Activated CD8-positive, alpha-beta T cell treated with anti-CD3 and anti-CD28 coated beads, Interleukin-2, amount 10 ng/mL, durations not matched to agents 7 days and 5 days (primary cell): ENCODE measurements at regions of chr19 and their contacts with region 1.

Region 1: DNA sequence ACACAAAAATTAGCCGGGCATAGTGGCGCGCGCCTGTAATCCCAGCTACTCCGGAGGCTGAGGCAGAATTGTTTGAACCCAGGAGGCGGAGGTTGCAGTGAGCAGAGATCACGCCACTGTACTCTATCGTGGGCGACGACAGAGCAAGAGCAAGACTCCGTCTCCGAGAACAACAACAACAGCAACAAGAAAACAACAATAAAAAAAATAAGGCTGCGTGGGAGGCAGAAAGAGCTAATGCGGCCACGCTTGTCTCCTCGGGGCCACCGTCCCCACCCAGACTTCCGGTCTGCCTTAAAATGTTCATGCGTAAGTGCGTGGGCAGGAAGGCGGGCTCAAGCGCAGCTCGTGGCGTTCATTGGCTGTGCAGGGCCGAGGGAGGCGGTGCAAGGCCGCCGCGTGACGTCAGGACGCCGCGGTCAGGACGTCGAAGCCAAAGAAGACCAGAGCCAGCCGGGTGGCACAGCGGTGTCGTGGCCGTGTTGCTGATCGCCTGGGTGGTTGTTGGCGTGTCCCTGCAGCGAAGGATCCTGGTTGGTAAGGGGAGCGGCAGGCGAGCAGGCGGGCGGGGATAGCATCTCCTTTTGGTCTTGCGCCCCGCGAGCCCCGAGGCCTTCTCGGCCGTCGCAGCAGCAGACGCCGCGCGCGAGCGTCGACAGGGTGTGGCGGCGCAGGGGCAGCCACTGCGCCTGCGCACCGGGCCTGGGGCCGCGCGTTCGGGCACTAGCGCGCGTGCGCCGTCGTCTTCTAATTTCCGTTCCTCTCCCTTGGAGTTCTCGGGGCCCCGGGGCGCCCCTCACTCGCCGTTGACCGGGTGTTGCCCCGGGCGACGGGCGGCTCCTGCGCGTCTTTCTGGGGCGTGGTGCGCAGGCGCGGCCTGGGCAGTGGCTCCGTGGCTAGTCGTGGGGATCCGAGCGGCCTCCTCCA is at the start of gene LENG8:
- DNase-seq: peak; percentile 98
- ATAC-seq: peak; percentile 92
- H3K4me3 Mint-ChIP-seq: peak within 1 kb of the TSS; percentile 97
- H3K27ac Mint-ChIP-seq: peak within 1 kb of the TSS; percentile 100
- H3K4me1 Mint-ChIP-seq: peaks cover 36% of the 10 kb centered on the region
- H3K27me3 Mint-ChIP-seq: no peaks in the 10 kb centered on the region
- total RNA-seq, gene LENG8: 171 to 181 TPM

Region 2: GRCh38 chr19:54463531-54464043 is 14.6 kb after region 1 on chr19 and contains the start of gene LENG9:
- CTCF ChIA-PET with region 1: interaction called, 6 read pairs
- POLR2A ChIA-PET with region 1: interaction called, 22 read pairs
- DNase-seq: peak; percentile 99
- ATAC-seq: peak; percentile 71
- H3K4me3 Mint-ChIP-seq: peak within 1 kb of the TSS; percentile 85
- H3K27ac Mint-ChIP-seq: peak within 1 kb of the TSS; percentile 91
- H3K4me1 Mint-ChIP-seq: peaks cover 38% of the 10 kb centered on the region
- H3K27me3 Mint-ChIP-seq: peaks cover 16% of the 10 kb centered on the region
- total RNA-seq, gene LENG9: 5.3 to 5.6 TPM

Region 3: GRCh38 chr19:54478677-54479266 is 29.7 kb after region 1 on chr19:
- CTCF ChIA-PET with region 1: no interaction called
- POLR2A ChIA-PET with region 1: no interaction called
- DNase-seq: peak; percentile 64
- ATAC-seq: peak; percentile 49
- H3K4me3 Mint-ChIP-seq: no peak overlapping the region
- H3K27ac Mint-ChIP-seq: no peak overlapping the region
- H3K4me1 Mint-ChIP-seq: peaks cover 32% of the 10 kb centered on the region
- H3K27me3 Mint-ChIP-seq: peaks cover 28% of the 10 kb centered on the region

Region 4: DNA sequence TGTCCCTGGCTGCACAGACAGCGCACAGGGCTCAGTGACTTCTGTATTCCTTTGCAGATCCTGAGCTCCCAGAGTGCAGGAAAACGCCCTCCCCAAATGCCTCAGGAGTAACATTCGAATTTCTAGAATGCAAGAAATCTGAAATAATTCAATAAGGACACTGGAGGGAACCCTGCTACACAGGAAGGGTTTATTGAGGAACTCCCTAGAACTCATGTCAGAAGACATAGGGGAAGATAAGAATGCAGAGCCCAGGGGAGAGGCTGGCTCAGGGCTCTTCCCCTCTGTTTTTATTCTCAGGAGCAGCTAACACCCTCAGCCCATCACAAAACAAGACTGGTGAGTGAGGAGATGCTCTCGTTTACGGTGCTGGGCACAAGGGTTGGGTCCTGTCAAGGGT is 151.2 kb after region 1 on chr19:
- CTCF ChIA-PET with region 1: no interaction called
- POLR2A ChIA-PET with region 1: no interaction called
- DNase-seq: no peak
- ATAC-seq: no peak
- H3K4me3 Mint-ChIP-seq: no peak overlapping the region
- H3K27ac Mint-ChIP-seq: no peak overlapping the region
- H3K4me1 Mint-ChIP-seq: no peaks in the 10 kb centered on the region
- H3K27me3 Mint-ChIP-seq: peaks cover 20% of the 10 kb centered on the region